ENCODE measurements at regions of chr6 and their contacts with region 1.

Region 1: GRCh38 chr6:20401205-20402091 is at the start of gene E2F3:
- DNase-seq: peak; percentile 100
- H3K4me3 ChIP-seq: peak within 1 kb of the TSS; percentile 65 to 90 (median 88)
- H3K27ac ChIP-seq: peak within 1 kb of the TSS; percentile 74 to 90 (median 88)
- H3K4me1 ChIP-seq: peaks cover 0 to 31% (median 27%) of the 10 kb centered on the region in 4 donors
- H3K27me3 ChIP-seq: no peaks in the 10 kb centered on the region
- CTCF ChIP-seq: peak in 1 of 3 experiments; percentile 4
- EP300 ChIP-seq: no peak
- POLR2A ChIP-seq: no peak
- total RNA-seq, gene E2F3: 2.9 to 5.6 (median 4.2) TPM

Region 2: GRCh38 chr6:20092071-20092566 is 309.3 kb before region 1 on chr6:
- intact Hi-C with region 1: loop called (anchors 10 kb)
- DNase-seq: no peak
- H3K4me3 ChIP-seq: no peak overlapping the region
- H3K27ac ChIP-seq: no peak overlapping the region
- H3K4me1 ChIP-seq: peaks cover 0 to 6% (median 5%) of the 10 kb centered on the region in 4 donors
- H3K27me3 ChIP-seq: no peaks in the 10 kb centered on the region
- CTCF ChIP-seq: peak; percentile 74 to 79 (median 74)
- EP300 ChIP-seq: no peak
- POLR2A ChIP-seq: no peak

Region 3: GRCh38 chr6:20212392-20213217 is 188.8 kb before region 1 on chr6 and contains the start of gene MBOAT1:
- intact Hi-C with region 1: loop called (anchors 5 kb)
- DNase-seq: peak; percentile 95
- H3K4me3 ChIP-seq: peak within 1 kb of the TSS; percentile 79 to 90 (median 86)
- H3K27ac ChIP-seq: peak within 1 kb of the TSS; percentile 86 to 93 (median 92)
- H3K4me1 ChIP-seq: peaks cover 43 to 54% (median 46%) of the 10 kb centered on the region in 4 donors
- H3K27me3 ChIP-seq: no peaks in the 10 kb centered on the region
- CTCF ChIP-seq: peak in 2 of 3 experiments; percentile 16 to 24
- EP300 ChIP-seq: no peak
- POLR2A ChIP-seq: no peak
- total RNA-seq, gene MBOAT1: 4.3 to 5.6 (median 4.7) TPM

Region 4: DNA sequence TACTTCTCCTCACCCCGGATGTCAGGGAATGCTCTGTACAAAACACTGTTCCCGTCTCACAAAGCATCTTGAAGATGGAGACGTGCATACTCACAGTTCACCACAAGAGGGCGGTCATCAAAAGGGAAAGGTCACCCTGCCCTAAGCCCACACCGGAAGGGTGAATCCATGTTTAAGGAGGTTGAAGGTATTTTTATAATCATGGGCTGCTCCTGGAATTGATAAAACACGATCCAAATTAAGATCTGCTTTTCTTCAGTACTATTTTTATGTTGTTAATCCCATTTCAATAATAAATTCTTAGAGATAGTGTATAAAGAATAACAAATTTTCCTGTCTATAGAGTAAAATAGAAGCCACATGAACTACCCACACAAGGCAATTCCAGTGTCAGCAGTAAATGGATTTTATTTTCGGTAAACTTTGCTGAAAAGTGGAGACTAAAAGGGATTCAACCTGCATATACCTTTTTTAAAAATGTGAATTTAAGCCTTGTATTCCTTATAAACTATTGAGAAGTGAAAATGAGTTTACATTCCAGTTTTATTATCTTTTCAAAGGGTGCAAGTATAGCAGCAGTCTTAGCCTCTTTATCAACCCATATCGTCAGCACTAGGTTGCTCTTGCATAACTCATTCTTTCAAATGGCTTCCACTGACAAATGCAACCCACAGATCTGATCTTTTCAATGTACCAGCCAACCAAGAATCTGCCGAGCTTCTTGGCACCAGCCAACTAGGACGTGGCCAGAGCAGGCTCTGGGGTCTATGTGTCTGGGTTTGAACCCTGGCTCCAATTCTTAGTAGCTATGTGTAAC is 109.5 kb before region 1 on chr6:
- intact Hi-C with region 1: loop called (anchors 5 kb)
- DNase-seq: peak; percentile 96
- H3K4me3 ChIP-seq: no peak overlapping the region
- H3K27ac ChIP-seq: no peak overlapping the region
- H3K4me1 ChIP-seq: peaks cover 0 to 4% (median 0%) of the 10 kb centered on the region in 4 donors
- H3K27me3 ChIP-seq: no peaks in the 10 kb centered on the region
- CTCF ChIP-seq: peak; percentile 88 to 95 (median 88)
- EP300 ChIP-seq: no peak
- POLR2A ChIP-seq: no peak

Region 5: GRCh38 chr6:20534295-20535262 is 133.1 kb after region 1 on chr6 and contains the start of gene CDKAL1:
- intact Hi-C with region 1: loop called (anchors 5 kb)
- DNase-seq: peak; percentile 96
- H3K4me3 ChIP-seq: peak within 1 kb of the TSS; percentile 86 to 95 (median 88)
- H3K27ac ChIP-seq: peak within 1 kb of the TSS; percentile 84 to 93 (median 90)
- H3K4me1 ChIP-seq: peaks cover 11 to 32% (median 21%) of the 10 kb centered on the region in 4 donors
- H3K27me3 ChIP-seq: no peaks in the 10 kb centered on the region
- CTCF ChIP-seq: peak in 1 of 3 experiments; percentile 19
- EP300 ChIP-seq: no peak
- POLR2A ChIP-seq: no peak
- total RNA-seq, gene CDKAL1: 10.3 to 11.2 (median 10.5) TPM